ENCODE measurements at regions of chr5 and their contacts with region 1.

Region 1: GRCh38 chr5:154368041-154368800 is 77.6 kb upstream of the SAP30L start:
- DNase-seq: peak; percentile 74
- ATAC-seq: peak; percentile 55
- H3K4me3 ChIP-seq: no peak overlapping the region; a peak in 1 of 6 replicates
- H3K27ac ChIP-seq: peak overlapping the region; percentile 45
- H3K4me1 ChIP-seq: peaks cover 62% of the 10 kb centered on the region
- H3K27me3 ChIP-seq: no peaks in the 10 kb centered on the region
- CTCF ChIP-seq: no peak
- EP300 ChIP-seq: no peak
- POLR2A ChIP-seq: no peak
- RAD21 ChIP-seq: no peak

Region 2: GRCh38 chr5:154287136-154287535 is 81.1 kb before region 1 on chr5:
- CTCF ChIA-PET with region 1: no interaction called
- POLR2A ChIA-PET with region 1: no interaction called
- in situ Hi-C with region 1: no loop called
- intact Hi-C with region 1: loop called (anchors 5 kb)
- DNase-seq: peak; percentile 80
- ATAC-seq: peak; percentile 79
- H3K4me3 ChIP-seq: no peak overlapping the region
- H3K27ac ChIP-seq: no peak overlapping the region
- H3K4me1 ChIP-seq: peaks cover 50% of the 10 kb centered on the region
- H3K27me3 ChIP-seq: no peaks in the 10 kb centered on the region
- CTCF ChIP-seq: no peak
- EP300 ChIP-seq: peak in 1 of 2 experiments; percentile 26; a peak in 1 of 4 replicates
- POLR2A ChIP-seq: no peak
- RAD21 ChIP-seq: no peak

Region 3: GRCh38 chr5:154341620-154342019 is 26.6 kb before region 1 on chr5:
- CTCF ChIA-PET with region 1: no interaction called
- POLR2A ChIA-PET with region 1: no interaction called
- in situ Hi-C with region 1: no loop called
- intact Hi-C with region 1: loop called (anchors 2 kb)
- DNase-seq: peak; percentile 85
- ATAC-seq: peak; percentile 99
- H3K4me3 ChIP-seq: no peak overlapping the region
- H3K27ac ChIP-seq: peak overlapping the region; percentile 32
- H3K4me1 ChIP-seq: peaks cover 18% of the 10 kb centered on the region
- H3K27me3 ChIP-seq: no peaks in the 10 kb centered on the region
- CTCF ChIP-seq: no peak
- EP300 ChIP-seq: peak in 1 of 2 experiments; percentile 45; a peak in 2 of 4 replicates
- POLR2A ChIP-seq: no peak
- RAD21 ChIP-seq: no peak

Region 4: GRCh38 chr5:154351566-154351965 is 16.7 kb before region 1 on chr5:
- CTCF ChIA-PET with region 1: no interaction called
- POLR2A ChIA-PET with region 1: interaction called, 4 read pairs
- in situ Hi-C with region 1: no loop called
- intact Hi-C with region 1: loop called (anchors 2 kb)
- DNase-seq: no peak
- ATAC-seq: no peak
- H3K4me3 ChIP-seq: no peak overlapping the region
- H3K27ac ChIP-seq: no peak overlapping the region
- H3K4me1 ChIP-seq: peaks cover 61% of the 10 kb centered on the region
- H3K27me3 ChIP-seq: no peaks in the 10 kb centered on the region
- CTCF ChIP-seq: no peak
- EP300 ChIP-seq: no peak
- POLR2A ChIP-seq: no peak
- RAD21 ChIP-seq: no peak

Region 5: GRCh38 chr5:154384480-154385235 is 16.4 kb after region 1 on chr5:
- CTCF ChIA-PET with region 1: no interaction called
- POLR2A ChIA-PET with region 1: interaction called, 3 read pairs
- in situ Hi-C with region 1: no loop called
- intact Hi-C with region 1: loop called (anchors 2 kb)
- DNase-seq: no peak
- ATAC-seq: no peak
- H3K4me3 ChIP-seq: no peak overlapping the region
- H3K27ac ChIP-seq: no peak overlapping the region
- H3K4me1 ChIP-seq: peaks cover 45% of the 10 kb centered on the region
- H3K27me3 ChIP-seq: no peaks in the 10 kb centered on the region
- CTCF ChIP-seq: no peak
- EP300 ChIP-seq: no peak
- POLR2A ChIP-seq: no peak
- RAD21 ChIP-seq: no peak

Measured in HepG2 (cell line).